Prostate gland (tissue), 2 donors: ENCODE measurements at regions of chrX and their contacts with region 1.

Region 1: GRCh38 chrX:101595739-101596419 is 21.9 kb downstream of the ARMCX6 start:
- DNase-seq: peak; percentile 39
- H3K4me3 ChIP-seq: no peak overlapping the region
- H3K27ac ChIP-seq: no peak overlapping the region
- H3K4me1 ChIP-seq: no peaks in the 10 kb centered on the region
- H3K27me3 ChIP-seq: no peaks in the 10 kb centered on the region
- CTCF ChIP-seq: peak in 3 of 4 experiments; percentile 60 to 72 (median 64)
- POLR2A ChIP-seq: no peak

Region 2: DNA sequence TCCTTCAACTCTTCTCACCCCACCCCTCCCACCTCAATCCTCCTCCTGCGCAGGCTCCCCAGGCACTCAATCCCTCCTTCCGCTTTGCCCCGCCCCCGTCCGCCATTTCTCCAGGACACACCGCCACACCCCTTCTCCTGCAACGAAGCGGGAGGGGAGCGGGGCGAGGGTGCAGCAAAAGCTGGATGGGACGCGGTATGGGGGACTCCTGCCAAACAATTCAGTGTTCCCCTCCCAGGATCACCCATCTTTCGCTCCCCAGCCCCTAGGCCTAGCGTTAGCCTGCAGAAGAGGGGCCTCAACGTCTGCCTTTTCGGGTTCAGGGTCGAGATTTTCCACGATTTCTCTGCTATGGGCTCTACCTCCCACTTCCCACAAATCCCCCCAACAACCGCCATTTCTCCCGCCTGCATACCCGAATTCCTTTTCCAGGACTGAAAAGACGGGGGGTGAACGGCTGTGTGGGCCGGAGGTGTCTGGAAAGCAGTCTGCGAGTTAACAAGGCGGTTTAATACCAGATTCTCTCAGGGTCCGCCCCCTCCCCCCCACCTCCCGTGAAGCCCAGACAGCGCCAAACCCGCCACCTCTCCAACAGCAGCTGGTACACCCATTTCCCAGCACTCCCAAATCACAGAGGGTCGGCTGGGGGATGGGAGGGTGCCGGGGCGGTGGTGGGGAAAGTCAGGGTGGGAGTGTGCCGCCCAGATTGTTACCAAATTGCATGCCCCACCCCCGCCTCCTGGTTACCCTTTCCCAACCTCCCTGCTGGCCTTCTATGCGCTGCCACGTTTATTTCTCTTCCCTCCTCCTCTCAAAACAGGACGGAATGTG is 63.0 kb after region 1 on chrX:
- intact Hi-C with region 1: no loop called
- DNase-seq: peak; percentile 62
- H3K4me3 ChIP-seq: peak overlapping the region; percentile 47 to 48
- H3K27ac ChIP-seq: peak overlapping the region; percentile 79 to 82
- H3K4me1 ChIP-seq: no peaks in the 10 kb centered on the region
- H3K27me3 ChIP-seq: no peaks in the 10 kb centered on the region
- CTCF ChIP-seq: no peak
- POLR2A ChIP-seq: peak; percentile 61

Region 3: DNA sequence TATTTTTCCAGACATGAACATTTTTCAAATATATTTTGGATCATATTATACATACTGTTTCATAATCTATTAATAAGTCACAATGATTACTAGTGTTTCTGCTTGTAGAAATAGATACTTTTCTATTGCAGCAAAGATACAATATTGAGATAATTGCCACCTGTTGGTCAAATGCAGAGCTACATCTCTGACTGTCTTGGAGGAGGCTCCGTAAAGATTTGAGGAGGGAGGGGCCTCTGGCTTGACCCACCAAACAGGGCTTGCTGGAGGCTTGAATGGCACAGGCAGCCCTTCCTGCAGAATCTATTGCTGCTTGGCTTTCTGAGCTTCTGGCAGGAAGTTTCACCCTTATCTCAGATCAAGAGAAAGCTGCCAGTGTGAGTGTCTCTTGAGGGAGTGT is 163.1 kb after region 1 on chrX:
- intact Hi-C with region 1: loop called (anchors 5 kb)
- DNase-seq: peak; percentile 20
- H3K4me3 ChIP-seq: no peak overlapping the region
- H3K27ac ChIP-seq: no peak overlapping the region
- H3K4me1 ChIP-seq: no peaks in the 10 kb centered on the region
- H3K27me3 ChIP-seq: no peaks in the 10 kb centered on the region
- CTCF ChIP-seq: peak in 2 of 4 experiments; percentile 26 to 32
- POLR2A ChIP-seq: no peak

Region 4: DNA sequence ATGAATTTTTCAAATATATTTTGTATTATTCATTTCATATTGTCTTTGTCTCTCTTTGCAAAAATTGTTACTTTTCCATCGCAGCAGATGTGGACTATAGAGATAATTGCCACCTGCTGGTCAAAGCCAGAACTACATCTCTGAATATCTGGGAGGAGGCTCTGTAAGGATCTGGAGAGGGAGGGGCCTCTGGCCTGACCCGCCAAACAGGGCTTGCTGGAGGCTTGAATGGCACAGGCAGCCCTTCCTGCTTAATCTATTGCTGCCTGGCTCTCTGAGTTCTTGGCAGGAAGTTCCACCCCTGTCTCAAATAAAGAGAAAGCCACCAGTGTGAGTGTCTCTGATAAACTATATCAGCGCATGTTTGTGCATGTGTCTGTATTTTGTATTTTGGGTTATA is 203.5 kb after region 1 on chrX:
- intact Hi-C with region 1: loop called (anchors 5 kb)
- DNase-seq: peak; percentile 88
- H3K4me3 ChIP-seq: no peak overlapping the region
- H3K27ac ChIP-seq: no peak overlapping the region
- H3K4me1 ChIP-seq: no peaks in the 10 kb centered on the region
- H3K27me3 ChIP-seq: no peaks in the 10 kb centered on the region
- CTCF ChIP-seq: peak; percentile 50 to 79 (median 66)
- POLR2A ChIP-seq: no peak